Dendritic cell treated with granulocyte-macrophage colony-stimulating factor and Interleukin-4, amounts not matched to agents 40 ng/mL and 50 ng/mL, for 4 days (primary cell): ENCODE measurements at regions of chr5 and their contacts with region 1.

Region 1: GRCh38 chr5:131263648-131264450 is at the start of gene CDC42SE2:
- H3K4me3 Mint-ChIP-seq: peak within 1 kb of the TSS; percentile 80
- H3K27ac Mint-ChIP-seq: peak within 1 kb of the TSS; percentile 87
- H3K4me1 Mint-ChIP-seq: peaks cover 35% of the 10 kb centered on the region
- H3K27me3 Mint-ChIP-seq: no peaks in the 10 kb centered on the region

Region 2: DNA sequence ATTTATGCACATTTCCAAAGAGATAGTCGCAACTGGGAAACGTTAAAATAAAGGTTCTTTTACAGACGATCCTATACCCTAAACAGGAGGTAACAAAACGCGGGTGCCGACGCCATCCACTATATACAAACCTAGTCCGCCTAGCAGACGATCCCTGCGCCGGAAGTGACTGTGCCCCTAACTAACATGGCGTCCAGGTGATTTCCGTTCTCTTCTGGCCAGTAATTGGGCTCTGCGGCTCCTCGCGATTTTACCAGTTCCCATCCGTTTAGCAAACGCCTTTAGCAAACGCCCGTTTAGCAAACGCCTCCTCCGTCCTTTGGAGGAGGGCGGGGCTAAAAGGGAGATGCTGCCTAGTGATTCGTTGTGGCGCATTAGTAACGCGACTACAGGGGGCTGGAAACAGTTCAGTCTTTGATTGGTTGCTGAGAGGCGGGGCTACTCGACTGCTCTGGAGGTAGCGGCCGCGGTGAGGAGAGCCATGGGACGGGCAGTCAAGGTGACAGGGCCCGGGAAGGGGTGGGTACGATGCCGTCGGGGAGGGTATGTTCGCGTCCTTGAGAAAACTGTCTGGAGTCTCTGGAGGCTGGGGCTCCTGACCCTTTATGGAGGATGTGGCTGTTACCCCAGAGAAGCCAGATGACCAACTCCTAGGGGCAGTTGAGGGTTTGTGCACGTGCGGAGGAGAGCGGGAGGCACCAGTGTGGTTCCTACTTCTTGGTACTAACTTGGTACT is 93.1 kb before region 1 on chr5 and contains the start of gene LYRM7:
- intact Hi-C with region 1: loop called (anchors 2 kb)
- H3K4me3 Mint-ChIP-seq: peak within 1 kb of the TSS; percentile 98
- H3K27ac Mint-ChIP-seq: peak within 1 kb of the TSS; percentile 94
- H3K4me1 Mint-ChIP-seq: peaks cover 24% of the 10 kb centered on the region
- H3K27me3 Mint-ChIP-seq: no peaks in the 10 kb centered on the region

Region 3: DNA sequence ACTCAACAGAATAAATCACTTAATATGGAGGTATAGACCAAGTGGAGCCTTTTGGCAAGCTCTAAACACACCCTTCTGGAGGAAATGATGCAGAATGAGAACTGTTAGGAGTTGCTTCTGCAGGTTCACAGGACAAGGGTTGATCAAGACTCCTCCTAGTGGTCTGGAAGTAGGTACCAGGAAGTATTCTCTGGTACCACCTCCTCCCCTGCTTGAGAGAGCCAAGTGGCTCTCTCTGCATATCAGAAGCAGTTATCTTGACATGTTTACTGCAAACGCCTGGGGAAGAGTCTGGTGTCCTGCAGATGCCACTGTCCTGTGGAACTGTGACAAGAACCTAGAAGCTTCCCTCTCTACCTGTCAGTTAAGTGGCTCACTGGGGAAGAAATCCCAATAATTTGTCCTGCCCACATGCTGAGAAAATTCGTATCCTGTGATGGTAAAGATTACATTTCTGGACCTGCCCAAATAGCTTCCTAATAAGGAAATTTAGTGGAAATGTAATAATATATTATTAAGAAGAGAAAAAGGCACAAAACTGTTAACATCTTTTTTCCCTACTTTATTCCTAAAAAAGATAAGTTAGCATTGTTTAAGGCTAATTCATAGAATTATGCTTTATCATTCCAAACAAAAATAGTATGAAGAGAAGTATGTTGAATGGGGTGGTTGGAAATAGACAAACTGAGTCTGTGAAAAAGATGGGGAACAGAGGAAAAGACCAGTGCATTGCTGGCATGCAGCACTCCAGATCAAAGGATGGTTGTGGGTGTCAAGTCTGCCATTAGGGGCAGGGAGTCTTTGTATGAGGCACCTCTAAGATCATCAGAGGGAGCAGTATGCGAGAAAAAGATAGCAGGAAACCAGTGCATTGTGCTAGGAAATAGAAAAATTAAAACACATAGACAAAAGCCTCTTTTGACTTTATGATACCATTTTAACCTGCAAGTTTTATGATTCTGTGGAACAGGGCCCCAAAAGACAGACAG is 118.9 kb after region 1 on chr5:
- intact Hi-C with region 1: loop called (anchors 1 kb)
- H3K4me3 Mint-ChIP-seq: no peak overlapping the region
- H3K27ac Mint-ChIP-seq: peak overlapping the region; percentile 86
- H3K4me1 Mint-ChIP-seq: peaks cover 34% of the 10 kb centered on the region
- H3K27me3 Mint-ChIP-seq: no peaks in the 10 kb centered on the region

Region 4: DNA sequence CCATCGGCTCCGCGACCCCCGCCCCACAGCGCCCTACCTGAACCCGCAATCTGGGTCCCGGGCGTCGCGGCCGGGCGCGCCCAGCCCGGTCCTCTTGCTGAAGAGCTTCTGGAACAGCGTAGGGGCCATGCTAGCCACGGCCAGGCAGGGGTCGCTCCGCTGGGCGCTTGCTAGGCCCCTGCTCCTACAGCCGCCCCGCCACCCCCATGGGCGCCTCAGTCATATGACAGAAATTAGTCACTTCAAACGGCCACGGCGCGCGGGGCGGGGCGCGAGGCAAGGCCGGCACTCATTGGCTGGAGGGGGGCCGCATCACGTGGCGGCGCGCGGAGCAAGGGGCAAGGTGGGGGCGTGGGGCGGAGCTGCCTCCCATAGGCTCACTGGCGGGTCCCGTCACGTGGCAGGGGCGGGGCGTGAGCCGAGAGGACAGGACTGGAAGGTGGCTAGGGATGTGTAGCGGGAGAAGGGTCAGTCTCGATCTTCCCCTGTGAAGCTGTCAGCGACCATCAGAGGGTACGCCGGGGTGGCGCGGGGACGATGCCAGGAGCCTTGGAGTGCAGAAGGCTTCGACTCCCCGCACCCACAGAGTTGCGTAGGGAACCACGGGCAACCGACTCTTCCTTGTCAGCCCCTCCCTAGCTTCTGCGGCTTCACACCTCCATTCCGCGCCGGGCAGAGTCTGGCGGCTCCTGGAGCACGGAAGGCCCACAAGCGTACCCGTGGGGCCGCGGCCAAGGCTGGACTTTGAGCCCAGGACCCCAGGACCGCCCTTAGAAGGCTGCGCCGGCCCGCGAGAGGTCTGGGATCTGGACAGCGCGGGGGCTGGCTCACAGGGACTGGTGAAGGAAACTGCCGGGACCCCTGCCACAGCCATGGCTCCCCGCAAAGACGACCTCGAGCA is 533.2 kb after region 1 on chr5 and contains the start of gene FNIP1:
- intact Hi-C with region 1: loop called (anchors 10 kb)
- H3K4me3 Mint-ChIP-seq: peak within 1 kb of the TSS; percentile 96
- H3K27ac Mint-ChIP-seq: peak within 1 kb of the TSS; percentile 96
- H3K4me1 Mint-ChIP-seq: peaks cover 25% of the 10 kb centered on the region
- H3K27me3 Mint-ChIP-seq: no peaks in the 10 kb centered on the region